ENCODE measurements at regions of chr17 and their contacts with region 1.

Region 1: DNA sequence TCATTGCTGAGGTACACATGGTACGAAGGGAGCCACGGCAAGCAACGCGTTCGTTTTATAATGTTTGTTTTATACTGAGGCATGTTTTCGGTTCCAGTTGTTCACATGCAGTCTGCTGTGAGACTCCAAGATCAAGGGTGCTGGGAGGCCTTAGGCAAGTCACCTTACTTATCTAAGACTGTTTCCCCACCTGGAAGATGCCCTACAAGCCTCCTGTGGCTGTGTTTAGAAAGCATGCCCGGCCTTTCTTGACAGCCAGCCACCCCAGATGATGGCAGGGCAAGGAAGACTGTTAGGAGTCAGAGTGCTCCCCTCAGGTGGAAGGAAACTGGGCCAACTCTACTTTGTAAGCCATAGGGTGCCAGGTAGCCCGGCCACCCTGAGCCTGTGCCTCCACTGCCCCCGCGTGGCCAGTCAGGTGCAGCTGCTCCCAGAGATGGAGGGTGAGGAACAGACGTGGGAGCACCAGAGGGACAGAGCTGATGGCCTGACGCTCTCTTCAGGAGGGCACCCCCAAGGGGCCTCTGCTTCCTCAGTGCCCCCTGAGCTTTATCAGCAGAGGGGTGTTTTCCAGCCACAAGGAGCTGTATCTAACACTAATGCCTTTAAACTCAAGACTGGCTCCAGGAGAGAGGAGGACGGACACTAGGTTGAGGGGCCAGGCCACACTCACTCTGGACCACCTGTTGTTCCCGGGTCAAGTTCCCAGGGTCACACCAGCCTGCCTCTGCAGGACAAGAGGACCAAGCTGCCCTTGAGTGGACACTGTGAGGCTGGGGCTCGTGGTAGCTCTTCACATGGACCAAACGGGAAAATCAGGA is 5.4 kb downstream of the NAT9 start:
- DNase-seq: peak; percentile 66 to 88 (median 78)
- ATAC-seq: peak; percentile 97
- H3K4me3 ChIP-seq: no peak overlapping the region
- H3K4me3 Mint-ChIP-seq: peak overlapping the region; percentile 54
- H3K27ac ChIP-seq: no peak overlapping the region
- H3K27ac Mint-ChIP-seq: peak overlapping the region; percentile 81
- H3K4me1 ChIP-seq: peaks cover 63% of the 10 kb centered on the region
- H3K4me1 Mint-ChIP-seq: peaks cover 34% of the 10 kb centered on the region
- H3K27me3 ChIP-seq: no peaks in the 10 kb centered on the region
- H3K27me3 Mint-ChIP-seq: no peaks in the 10 kb centered on the region
- CTCF ChIP-seq: peak; percentile 81

Region 2: DNA sequence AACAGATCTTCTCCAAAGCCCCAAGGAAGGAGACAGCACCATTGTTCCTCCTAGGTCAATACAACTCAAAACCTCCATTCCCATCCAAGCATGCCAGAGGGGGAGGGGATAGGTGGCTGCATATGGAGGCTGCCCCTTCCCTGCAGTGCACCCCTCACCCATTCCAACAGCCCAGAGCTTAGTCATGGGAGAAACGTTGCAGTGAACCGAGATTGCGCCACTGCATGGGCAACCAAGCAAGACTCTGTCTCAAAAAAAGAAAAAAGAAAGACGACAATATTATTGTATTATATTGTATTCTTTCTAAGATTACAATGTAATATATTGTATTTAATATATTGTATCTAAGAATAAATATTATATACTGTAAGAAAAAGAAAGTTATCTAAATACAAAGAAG is 110.8 kb before region 1 on chr17:
- CTCF ChIA-PET with region 1: interaction called, 29 read pairs
- POLR2A ChIA-PET with region 1: interaction called, 16 read pairs
- intact Hi-C with region 1: loop called (anchors 1 kb)
- DNase-seq: no peak
- ATAC-seq: no peak
- H3K4me3 ChIP-seq: no peak overlapping the region
- H3K4me3 Mint-ChIP-seq: no peak overlapping the region
- H3K27ac ChIP-seq: no peak overlapping the region
- H3K27ac Mint-ChIP-seq: no peak overlapping the region
- H3K4me1 ChIP-seq: peaks cover 6% of the 10 kb centered on the region
- H3K4me1 Mint-ChIP-seq: peaks cover 5% of the 10 kb centered on the region
- H3K27me3 ChIP-seq: peaks cover 5 to 12% of the 10 kb centered on the region in 2 experiments
- H3K27me3 Mint-ChIP-seq: peaks cover 52% of the 10 kb centered on the region
- CTCF ChIP-seq: no peak

Region 3: GRCh38 chr17:74690409-74690825 is 80.3 kb before region 1 on chr17:
- CTCF ChIA-PET with region 1: no interaction called
- POLR2A ChIA-PET with region 1: no interaction called
- intact Hi-C with region 1: no loop called
- DNase-seq: peak in 2 of 14 experiments; percentile 49 to 61
- ATAC-seq: no peak
- H3K4me3 ChIP-seq: no peak overlapping the region
- H3K4me3 Mint-ChIP-seq: no peak overlapping the region
- H3K27ac ChIP-seq: no peak overlapping the region
- H3K27ac Mint-ChIP-seq: no peak overlapping the region
- H3K4me1 ChIP-seq: peaks cover 2% of the 10 kb centered on the region
- H3K4me1 Mint-ChIP-seq: no peaks in the 10 kb centered on the region
- H3K27me3 ChIP-seq: no peaks in the 10 kb centered on the region
- H3K27me3 Mint-ChIP-seq: no peaks in the 10 kb centered on the region
- CTCF ChIP-seq: no peak

Region 4: DNA sequence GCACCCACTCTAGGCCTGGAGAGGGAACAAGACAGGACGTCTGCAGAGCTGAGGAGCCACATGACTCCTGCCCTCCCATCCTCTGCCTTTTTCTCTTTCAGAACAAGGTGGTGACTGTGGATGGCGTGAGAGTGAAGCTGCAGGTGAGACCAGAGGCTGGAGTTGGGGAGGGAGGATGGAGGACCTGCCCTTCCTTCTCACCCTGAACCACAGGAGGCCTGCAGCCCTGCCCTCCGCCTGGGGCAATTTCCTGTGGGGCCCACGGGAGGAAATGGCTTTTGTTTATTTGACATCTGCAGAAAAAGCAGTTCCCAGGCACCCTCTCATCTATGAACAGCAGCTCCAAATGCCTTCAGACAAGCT is 28.6 kb before region 1 on chr17:
- CTCF ChIA-PET with region 1: interaction called, 39 read pairs
- POLR2A ChIA-PET with region 1: interaction called, 28 read pairs
- intact Hi-C with region 1: loop called (anchors 1 kb)
- DNase-seq: peak in 11 of 14 experiments; percentile 32 to 81 (median 62)
- ATAC-seq: peak; percentile 5
- H3K4me3 ChIP-seq: peak overlapping the region; percentile 32
- H3K4me3 Mint-ChIP-seq: peak overlapping the region; percentile 82
- H3K27ac ChIP-seq: peak overlapping the region; percentile 58 to 65
- H3K27ac Mint-ChIP-seq: peak overlapping the region; percentile 91
- H3K4me1 ChIP-seq: peaks cover 100% of the 10 kb centered on the region
- H3K4me1 Mint-ChIP-seq: peaks cover 86% of the 10 kb centered on the region
- H3K27me3 ChIP-seq: no peaks in the 10 kb centered on the region
- H3K27me3 Mint-ChIP-seq: no peaks in the 10 kb centered on the region
- CTCF ChIP-seq: no peak

Region 5: DNA sequence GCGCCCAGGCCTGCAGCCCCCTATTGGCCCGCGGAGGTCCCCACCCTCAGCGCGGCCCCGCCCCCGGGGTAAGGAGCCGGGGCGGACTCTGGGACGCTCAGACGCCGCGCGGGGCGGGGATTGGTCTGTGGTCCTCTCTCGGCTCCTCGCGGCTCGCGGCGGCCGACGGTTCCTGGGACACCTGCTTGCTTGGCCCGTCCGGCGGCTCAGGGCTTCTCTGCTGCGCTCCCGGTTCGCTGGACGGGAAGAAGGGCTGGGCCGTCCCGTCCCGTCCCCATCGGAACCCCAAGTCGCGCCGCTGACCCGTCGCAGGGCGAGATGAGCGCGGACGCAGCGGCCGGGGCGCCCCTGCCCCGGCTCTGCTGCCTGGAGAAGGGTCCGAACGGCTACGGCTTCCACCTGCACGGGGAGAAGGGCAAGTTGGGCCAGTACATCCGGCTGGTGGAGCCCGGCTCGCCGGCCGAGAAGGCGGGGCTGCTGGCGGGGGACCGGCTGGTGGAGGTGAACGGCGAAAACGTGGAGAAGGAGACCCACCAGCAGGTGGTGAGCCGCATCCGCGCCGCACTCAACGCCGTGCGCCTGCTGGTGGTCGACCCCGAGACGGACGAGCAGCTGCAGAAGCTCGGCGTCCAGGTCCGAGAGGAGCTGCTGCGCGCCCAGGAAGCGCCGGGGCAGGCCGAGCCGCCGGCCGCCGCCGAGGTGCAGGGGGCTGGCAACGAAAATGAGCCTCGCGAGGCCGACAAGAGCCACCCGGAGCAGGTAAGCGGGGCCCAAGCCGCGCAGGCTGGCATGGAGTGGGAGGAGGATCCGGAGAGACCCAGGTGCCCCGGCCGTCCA is 22.0 kb before region 1 on chr17 and contains the start of gene NHERF1:
- CTCF ChIA-PET with region 1: interaction called, 39 read pairs
- POLR2A ChIA-PET with region 1: interaction called, 35 read pairs
- intact Hi-C with region 1: loop called (anchors 1 kb)
- DNase-seq: peak in 13 of 14 experiments; percentile 83 to 97 (median 94)
- ATAC-seq: peak; percentile 82
- H3K4me3 ChIP-seq: peak within 1 kb of the TSS; percentile 98
- H3K4me3 Mint-ChIP-seq: peak within 1 kb of the TSS; percentile 92
- H3K27ac ChIP-seq: peak within 1 kb of the TSS; percentile 48 to 84
- H3K27ac Mint-ChIP-seq: peak within 1 kb of the TSS; percentile 94
- H3K4me1 ChIP-seq: peaks cover 74% of the 10 kb centered on the region
- H3K4me1 Mint-ChIP-seq: peaks cover 74% of the 10 kb centered on the region
- H3K27me3 ChIP-seq: no peaks in the 10 kb centered on the region
- H3K27me3 Mint-ChIP-seq: no peaks in the 10 kb centered on the region
- CTCF ChIP-seq: no peak
- total RNA-seq, gene NHERF1: 68.4 to 72.4 TPM

Measured in CD4-positive, alpha-beta T cell (primary cell).